ENCODE measurements at regions of chr2 and their contacts with region 1.

Region 1: DNA sequence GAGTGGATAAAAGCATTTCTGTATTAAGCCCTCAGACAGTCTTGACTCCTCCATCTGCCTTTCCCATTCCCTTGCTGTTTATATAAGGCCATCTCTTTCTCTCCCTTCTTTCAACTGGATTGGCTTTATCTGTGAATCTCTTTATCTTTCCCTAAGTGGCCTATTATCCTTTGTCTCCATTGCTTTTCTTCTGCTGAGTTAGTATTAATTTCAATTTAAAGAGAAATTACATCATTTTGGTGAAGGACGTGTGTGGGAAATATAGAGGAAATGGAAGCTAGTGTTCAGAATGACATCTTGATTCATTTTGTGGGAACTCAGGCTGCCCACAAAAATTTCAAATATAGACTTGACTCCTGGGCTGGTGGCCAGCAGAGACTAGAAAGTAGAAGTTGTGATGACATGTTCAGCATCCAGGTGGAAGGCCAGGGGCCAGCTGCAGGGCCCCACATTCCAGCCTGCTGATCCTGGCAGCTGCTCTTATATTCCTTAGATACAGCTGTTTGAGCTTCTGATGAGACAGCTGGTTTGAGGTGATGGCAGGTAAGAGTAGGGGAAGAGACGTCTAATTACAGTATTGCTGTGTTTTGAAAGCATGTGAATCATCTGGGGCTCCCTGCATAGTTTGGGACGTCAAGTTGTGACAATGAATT is 52.3 kb downstream of the DIS3L2 start:
- DNase-seq: peak in 1 of 2 experiments; percentile 38
- H3K4me3 ChIP-seq: no peak overlapping the region
- H3K27ac ChIP-seq: no peak overlapping the region
- H3K4me1 ChIP-seq: peaks cover 4% of the 10 kb centered on the region; the same call in 1 of the 2 replicates
- H3K27me3 ChIP-seq: no peaks in the 10 kb centered on the region
- CTCF ChIP-seq: no peak

Region 2: GRCh38 chr2:231482806-231483391 is 530.9 kb before region 1 on chr2:
- CTCF ChIA-PET with region 1: no interaction called
- POLR2A ChIA-PET with region 1: no interaction called
- intact Hi-C with region 1: no loop called
- DNase-seq: peak in 1 of 2 experiments; percentile 68
- H3K4me3 ChIP-seq: peak overlapping the region; percentile 49; the same call in 1 of the 2 replicates
- H3K27ac ChIP-seq: no peak overlapping the region
- H3K4me1 ChIP-seq: no peaks in the 10 kb centered on the region
- H3K27me3 ChIP-seq: no peaks in the 10 kb centered on the region
- CTCF ChIP-seq: peak; percentile 77

Region 3: GRCh38 chr2:231854671-231855070 is 159.2 kb before region 1 on chr2:
- CTCF ChIA-PET with region 1: no interaction called
- POLR2A ChIA-PET with region 1: no interaction called
- intact Hi-C with region 1: no loop called
- DNase-seq: peak in 1 of 2 experiments; percentile 81
- H3K4me3 ChIP-seq: no peak overlapping the region
- H3K27ac ChIP-seq: no peak overlapping the region
- H3K4me1 ChIP-seq: no peaks in the 10 kb centered on the region
- H3K27me3 ChIP-seq: peaks cover 19% of the 10 kb centered on the region
- CTCF ChIP-seq: no peak

Region 4: DNA sequence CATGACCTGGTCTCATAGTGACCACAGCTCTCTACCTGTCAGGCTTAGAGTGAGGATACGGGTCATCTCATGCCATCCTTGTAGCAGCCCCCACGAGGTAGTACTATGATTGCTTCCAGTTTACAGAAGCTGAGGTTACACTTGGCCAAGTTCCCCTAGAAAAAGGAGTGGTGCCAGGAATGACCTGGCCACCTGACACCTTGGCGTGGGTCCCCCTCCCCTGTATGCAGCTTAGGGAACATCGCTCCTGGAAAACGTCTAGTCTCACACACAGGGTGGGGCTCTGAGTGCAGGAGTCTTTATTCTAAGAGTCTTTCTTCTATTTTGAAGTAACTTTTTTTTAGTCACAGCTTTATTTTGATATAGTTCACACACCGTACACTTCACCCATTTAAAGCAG is 102.4 kb before region 1 on chr2:
- CTCF ChIA-PET with region 1: no interaction called
- POLR2A ChIA-PET with region 1: interaction called, 10 read pairs
- intact Hi-C with region 1: no loop called
- DNase-seq: no peak
- H3K4me3 ChIP-seq: no peak overlapping the region
- H3K27ac ChIP-seq: no peak overlapping the region
- H3K4me1 ChIP-seq: no peaks in the 10 kb centered on the region
- H3K27me3 ChIP-seq: no peaks in the 10 kb centered on the region
- CTCF ChIP-seq: no peak

Region 5: GRCh38 chr2:231977430-231977829 is 36.4 kb before region 1 on chr2:
- CTCF ChIA-PET with region 1: no interaction called
- POLR2A ChIA-PET with region 1: interaction called, 16 read pairs
- intact Hi-C with region 1: no loop called
- DNase-seq: no peak
- H3K4me3 ChIP-seq: no peak overlapping the region
- H3K27ac ChIP-seq: no peak overlapping the region
- H3K4me1 ChIP-seq: no peaks in the 10 kb centered on the region
- H3K27me3 ChIP-seq: no peaks in the 10 kb centered on the region
- CTCF ChIP-seq: no peak